Right lobe of liver (tissue), 6 donors: ENCODE measurements at regions of chr6 and their contacts with region 1.

Region 1: DNA sequence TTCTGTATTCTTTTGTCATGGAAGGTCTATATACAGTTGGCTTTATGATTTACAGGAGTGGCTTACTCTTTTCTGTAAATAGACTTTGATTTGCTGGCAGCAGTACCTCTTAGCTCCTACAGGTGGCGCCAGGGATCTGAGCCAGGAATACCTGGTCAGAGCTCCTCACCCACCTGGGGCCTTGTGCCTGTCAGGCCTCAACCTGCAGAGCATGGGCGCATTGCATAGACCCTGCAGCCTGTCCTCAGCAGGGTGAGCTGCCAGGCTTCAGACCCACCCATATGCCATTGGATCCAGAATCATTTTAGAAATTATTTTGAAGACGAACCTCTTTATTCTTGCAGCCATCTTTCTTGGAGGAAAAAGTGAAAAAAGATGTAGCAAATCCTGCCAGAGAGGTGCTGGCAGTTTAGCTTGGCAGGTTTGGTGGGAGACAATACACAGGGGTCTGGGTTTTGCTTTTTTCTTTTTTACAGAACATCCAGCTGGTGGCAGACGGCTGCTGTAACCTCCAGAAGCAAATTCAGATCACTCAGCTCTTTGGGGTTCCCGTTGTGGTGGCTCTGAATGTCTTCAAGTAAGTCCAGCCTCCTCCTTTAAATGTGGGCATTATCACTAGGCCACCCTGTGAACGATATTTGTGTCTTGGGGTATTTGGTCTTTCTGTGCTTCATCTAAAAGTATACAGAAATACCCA is 149.1 kb downstream of the MTHFD1L start:
- DNase-seq: peak; percentile 73 to 76 (median 74)
- ATAC-seq: peak; percentile 94 to 96 (median 94)
- H3K4me3 ChIP-seq: no peak overlapping the region
- H3K27ac ChIP-seq: no peak overlapping the region
- H3K4me1 ChIP-seq: peaks cover 0 to 2% (median 0%) of the 10 kb centered on the region in 4 donors
- H3K27me3 ChIP-seq: no peaks in the 10 kb centered on the region
- CTCF ChIP-seq: peak; percentile 99
- POLR2A ChIP-seq: no peak

Region 2: GRCh38 chr6:150813993-150814359 is 200.6 kb before region 1 on chr6:
- intact Hi-C with region 1: no loop called
- DNase-seq: no peak
- ATAC-seq: peak in 1 of 4 donors; percentile 31
- H3K4me3 ChIP-seq: no peak overlapping the region
- H3K27ac ChIP-seq: no peak overlapping the region
- H3K4me1 ChIP-seq: no peaks in the 10 kb centered on the region
- H3K27me3 ChIP-seq: no peaks in the 10 kb centered on the region
- CTCF ChIP-seq: no peak
- POLR2A ChIP-seq: no peak

Region 3: GRCh38 chr6:151101161-151101820 is 86.7 kb after region 1 on chr6:
- intact Hi-C with region 1: no loop called
- DNase-seq: no peak
- ATAC-seq: peak in 1 of 4 donors; percentile 27
- H3K4me3 ChIP-seq: no peak overlapping the region
- H3K27ac ChIP-seq: no peak overlapping the region
- H3K4me1 ChIP-seq: peaks cover 0 to 5% (median 0%) of the 10 kb centered on the region in 4 donors
- H3K27me3 ChIP-seq: no peaks in the 10 kb centered on the region
- CTCF ChIP-seq: no peak
- POLR2A ChIP-seq: no peak

Region 4: DNA sequence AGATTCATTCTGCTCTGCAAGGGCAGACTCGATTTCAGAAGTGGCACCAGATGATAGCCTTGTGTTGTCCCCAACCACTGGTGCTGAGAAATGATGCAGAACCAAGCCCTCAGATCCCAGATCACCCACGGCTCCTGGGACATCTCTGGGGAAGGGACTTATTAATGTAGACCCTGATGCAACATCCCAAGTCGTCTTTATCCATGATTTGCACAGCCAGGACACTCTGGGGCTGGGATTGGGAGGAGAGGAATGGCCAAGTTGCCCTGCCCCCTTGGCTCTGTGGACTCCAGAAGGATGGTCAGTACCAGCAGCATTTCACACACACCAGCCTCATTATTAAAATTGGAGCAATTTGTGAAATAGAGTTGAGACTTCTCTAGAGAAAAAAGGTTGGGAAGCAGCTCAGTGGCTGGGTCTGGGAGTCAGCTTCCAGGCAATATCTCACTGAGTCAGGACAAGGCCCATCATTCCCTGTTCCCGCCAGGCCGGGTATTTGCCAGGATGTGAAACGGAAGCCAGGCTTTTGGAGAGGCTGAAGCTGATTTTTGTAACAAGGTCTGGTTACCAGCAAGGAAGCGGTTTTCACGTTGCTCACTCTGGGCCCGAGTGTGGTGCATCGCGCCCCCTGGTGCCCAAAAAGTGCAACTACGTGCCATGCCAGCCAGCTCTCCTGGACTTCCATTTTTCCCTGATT is 309.4 kb after region 1 on chr6:
- intact Hi-C with region 1: loop called (anchors 5 to 10 kb)
- DNase-seq: peak; percentile 80 to 83 (median 81)
- ATAC-seq: peak; percentile 83 to 90 (median 88)
- H3K4me3 ChIP-seq: no peak overlapping the region
- H3K27ac ChIP-seq: peak overlapping the region in 1 of 3 donors; percentile 26
- H3K4me1 ChIP-seq: peaks cover 0 to 21% (median 7%) of the 10 kb centered on the region in 4 donors
- H3K27me3 ChIP-seq: peaks cover 0 to 8% of the 10 kb centered on the region in 2 donors
- CTCF ChIP-seq: peak; percentile 97 to 99 (median 98)
- POLR2A ChIP-seq: no peak